ENCODE measurements at regions of chr2 and their contacts with region 1.

Region 1: DNA sequence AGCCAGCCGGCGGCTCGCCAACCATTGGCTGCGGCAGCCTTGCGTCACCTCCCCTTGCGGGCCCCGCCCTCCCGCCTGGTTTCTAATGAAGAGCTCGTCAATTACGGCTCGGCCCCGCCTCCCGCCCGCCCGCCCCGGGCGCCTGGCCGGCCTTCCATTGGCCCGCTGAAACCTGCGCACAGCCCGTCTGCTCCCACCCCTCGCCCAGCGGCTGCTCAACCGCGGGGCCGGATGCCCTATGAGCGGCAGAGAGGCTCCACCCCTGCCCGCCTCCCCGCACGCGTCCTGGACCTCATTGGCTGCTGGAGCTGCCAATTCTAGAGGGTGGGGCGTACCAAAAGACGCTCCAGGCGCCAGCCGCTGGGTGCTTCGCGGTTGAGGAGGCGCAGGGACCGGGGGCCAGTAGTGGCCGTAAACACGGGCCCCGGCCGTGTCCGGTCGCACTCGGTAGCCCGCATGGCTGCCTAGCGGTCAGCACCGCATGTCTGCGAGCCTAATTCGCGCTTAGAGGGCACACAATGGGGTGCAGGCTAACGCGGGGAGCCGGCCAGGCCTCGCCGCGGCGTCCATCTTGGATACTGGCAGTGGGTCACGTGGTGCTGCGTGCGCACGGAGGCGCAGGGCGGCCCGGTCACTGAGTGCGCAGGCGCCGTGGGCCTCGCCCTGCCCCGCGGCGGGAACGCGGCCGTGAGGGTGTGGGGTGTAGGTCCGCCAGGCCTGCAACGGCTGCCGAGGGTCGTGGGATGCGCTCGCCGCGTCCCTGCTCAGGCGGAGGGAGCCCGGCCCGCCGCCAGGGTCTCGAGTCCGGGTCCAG is 454 bp upstream of the HDAC4 start:
- DNase-seq: peak; percentile 99
- H3K4me3 Mint-ChIP-seq: peak overlapping the region; percentile 89
- H3K27ac Mint-ChIP-seq: peak overlapping the region; percentile 97
- H3K4me1 Mint-ChIP-seq: peaks cover 35% of the 10 kb centered on the region
- H3K27me3 Mint-ChIP-seq: no peaks in the 10 kb centered on the region

Region 2: GRCh38 chr2:239143858-239144718 is 257.2 kb before region 1 on chr2:
- CTCF ChIA-PET with region 1: no interaction called
- POLR2A ChIA-PET with region 1: no interaction called
- intact Hi-C with region 1: loop called (anchors 10 kb)
- DNase-seq: peak; percentile 37
- H3K4me3 Mint-ChIP-seq: no peak overlapping the region
- H3K27ac Mint-ChIP-seq: peak overlapping the region; percentile 18
- H3K4me1 Mint-ChIP-seq: peaks cover 7% of the 10 kb centered on the region
- H3K27me3 Mint-ChIP-seq: no peaks in the 10 kb centered on the region

Region 3: DNA sequence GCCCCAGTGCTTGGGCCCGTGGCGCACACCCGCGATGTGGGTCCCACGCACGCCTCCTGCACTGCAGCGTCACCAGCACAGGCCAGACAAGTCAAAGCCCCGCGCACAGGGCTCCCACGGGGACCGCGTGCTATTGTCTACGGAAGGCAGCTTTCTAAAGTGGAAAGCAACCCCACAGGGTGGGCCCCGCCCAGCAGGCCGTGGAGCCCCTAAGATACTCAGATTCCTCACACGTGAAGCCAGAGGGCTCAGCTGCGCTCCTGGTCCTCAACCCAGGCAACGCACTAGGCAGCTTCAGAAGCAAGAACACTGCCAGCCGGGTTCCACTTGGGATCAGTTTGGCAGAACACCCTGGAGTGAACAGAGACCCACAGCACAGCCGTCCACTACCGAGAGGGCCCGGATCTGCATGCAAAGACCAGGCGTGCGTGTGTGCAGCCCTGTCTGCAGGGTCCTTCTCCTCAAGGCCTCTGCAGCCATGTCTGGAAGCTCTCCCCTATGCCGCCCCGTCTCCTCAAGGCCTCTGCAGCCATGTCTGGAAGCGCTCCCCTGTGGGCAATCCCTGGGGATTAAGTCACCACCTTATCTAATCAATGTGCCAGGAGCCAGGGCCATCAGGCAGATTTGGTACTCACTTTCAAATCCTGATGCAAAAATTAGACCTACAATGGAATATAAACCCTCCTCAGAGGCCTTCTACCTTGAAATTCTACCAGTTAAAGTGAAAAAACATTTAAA is 231.8 kb before region 1 on chr2:
- CTCF ChIA-PET with region 1: no interaction called
- POLR2A ChIA-PET with region 1: no interaction called
- intact Hi-C with region 1: no loop called
- DNase-seq: no peak
- H3K4me3 Mint-ChIP-seq: no peak overlapping the region
- H3K27ac Mint-ChIP-seq: no peak overlapping the region
- H3K4me1 Mint-ChIP-seq: peaks cover 20% of the 10 kb centered on the region
- H3K27me3 Mint-ChIP-seq: no peaks in the 10 kb centered on the region

Region 4: GRCh38 chr2:239358062-239358754 is 43.1 kb before region 1 on chr2:
- CTCF ChIA-PET with region 1: no interaction called
- POLR2A ChIA-PET with region 1: no interaction called
- intact Hi-C with region 1: no loop called
- DNase-seq: no peak
- H3K4me3 Mint-ChIP-seq: no peak overlapping the region
- H3K27ac Mint-ChIP-seq: no peak overlapping the region
- H3K4me1 Mint-ChIP-seq: peaks cover 4% of the 10 kb centered on the region
- H3K27me3 Mint-ChIP-seq: no peaks in the 10 kb centered on the region

Region 5: DNA sequence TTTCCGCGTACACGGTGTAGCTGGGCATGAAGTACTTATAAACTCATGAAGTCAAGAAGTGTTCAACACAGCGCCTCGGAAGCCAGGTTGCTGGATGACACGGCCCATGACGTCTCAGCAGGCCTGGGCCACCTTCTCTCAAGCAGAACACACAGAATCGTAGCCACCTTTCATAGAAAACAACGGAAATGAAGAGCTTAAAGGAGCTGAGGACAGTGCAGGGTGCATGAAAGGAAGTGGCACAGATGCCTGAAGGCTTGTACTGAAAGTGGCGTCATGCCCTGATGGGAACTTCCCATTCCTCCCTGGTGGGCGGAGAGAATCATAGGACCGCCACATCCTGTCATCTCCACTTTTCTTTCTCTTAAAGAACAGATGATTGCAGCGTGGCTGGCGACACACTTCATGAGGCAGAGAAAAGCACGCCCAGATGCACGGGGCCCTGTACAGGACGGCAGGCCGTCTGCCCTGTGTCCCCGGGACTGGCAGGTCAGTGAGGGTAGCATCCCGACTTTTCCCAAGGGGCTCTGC is 31.6 kb before region 1 on chr2:
- CTCF ChIA-PET with region 1: no interaction called
- POLR2A ChIA-PET with region 1: interaction called, 10 read pairs
- intact Hi-C with region 1: loop called (anchors 1 kb)
- DNase-seq: peak; percentile 93
- H3K4me3 Mint-ChIP-seq: peak overlapping the region; percentile 68
- H3K27ac Mint-ChIP-seq: peak overlapping the region; percentile 92
- H3K4me1 Mint-ChIP-seq: peaks cover 8% of the 10 kb centered on the region
- H3K27me3 Mint-ChIP-seq: no peaks in the 10 kb centered on the region

Region 6: DNA sequence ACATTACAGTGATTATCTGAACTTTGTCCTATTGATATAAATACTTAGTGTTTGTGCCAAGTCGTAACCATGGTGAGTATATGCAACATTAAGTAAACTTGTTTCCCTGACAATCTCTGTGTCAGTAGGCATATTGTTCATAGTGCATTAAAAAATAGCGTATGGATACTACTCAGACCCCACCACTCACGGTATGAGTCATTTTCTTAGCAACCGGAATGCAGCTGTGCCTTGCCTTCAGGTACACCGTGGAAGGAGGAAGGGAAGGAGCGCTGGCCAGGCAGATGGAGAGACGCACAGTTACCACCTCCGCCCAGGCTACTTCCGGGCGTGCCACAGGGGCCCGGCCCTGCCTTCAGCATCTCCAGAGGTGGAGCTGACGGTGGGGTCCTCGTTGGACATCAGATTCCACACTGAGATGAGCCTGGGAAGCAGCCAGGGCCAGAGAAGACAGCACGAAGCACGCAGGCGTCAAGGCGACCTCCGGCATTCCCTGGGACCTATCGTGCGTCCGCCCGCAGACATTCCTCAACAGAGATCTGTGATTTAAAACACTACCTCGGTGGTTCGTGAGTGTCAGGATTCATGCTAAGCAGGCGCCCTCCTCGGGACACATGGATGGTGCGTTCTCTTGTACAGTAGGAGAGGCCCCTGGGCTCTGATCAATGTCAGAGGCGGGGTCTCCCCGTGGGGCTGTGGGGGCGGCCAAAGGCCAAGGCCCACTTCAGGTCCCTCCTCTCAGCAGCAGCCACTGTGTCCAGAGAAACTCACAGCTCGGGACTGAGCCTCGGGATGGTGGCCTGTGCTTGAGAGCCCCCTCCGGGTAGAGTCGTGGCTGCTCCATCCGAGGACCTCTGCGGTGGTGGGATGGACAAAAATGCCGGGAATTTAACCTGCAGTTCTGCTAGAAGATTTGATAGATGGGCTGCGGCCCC is 81.8 kb after region 1 on chr2:
- CTCF ChIA-PET with region 1: no interaction called
- POLR2A ChIA-PET with region 1: no interaction called
- intact Hi-C with region 1: no loop called
- DNase-seq: no peak
- H3K4me3 Mint-ChIP-seq: no peak overlapping the region
- H3K27ac Mint-ChIP-seq: no peak overlapping the region
- H3K4me1 Mint-ChIP-seq: no peaks in the 10 kb centered on the region
- H3K27me3 Mint-ChIP-seq: peaks cover 2% of the 10 kb centered on the region

Region 7: GRCh38 chr2:239791526-239792404 is 390.5 kb after region 1 on chr2:
- CTCF ChIA-PET with region 1: no interaction called
- POLR2A ChIA-PET with region 1: no interaction called
- intact Hi-C with region 1: no loop called
- DNase-seq: no peak
- H3K4me3 Mint-ChIP-seq: no peak overlapping the region
- H3K27ac Mint-ChIP-seq: no peak overlapping the region
- H3K4me1 Mint-ChIP-seq: no peaks in the 10 kb centered on the region
- H3K27me3 Mint-ChIP-seq: no peaks in the 10 kb centered on the region

Region 8: DNA sequence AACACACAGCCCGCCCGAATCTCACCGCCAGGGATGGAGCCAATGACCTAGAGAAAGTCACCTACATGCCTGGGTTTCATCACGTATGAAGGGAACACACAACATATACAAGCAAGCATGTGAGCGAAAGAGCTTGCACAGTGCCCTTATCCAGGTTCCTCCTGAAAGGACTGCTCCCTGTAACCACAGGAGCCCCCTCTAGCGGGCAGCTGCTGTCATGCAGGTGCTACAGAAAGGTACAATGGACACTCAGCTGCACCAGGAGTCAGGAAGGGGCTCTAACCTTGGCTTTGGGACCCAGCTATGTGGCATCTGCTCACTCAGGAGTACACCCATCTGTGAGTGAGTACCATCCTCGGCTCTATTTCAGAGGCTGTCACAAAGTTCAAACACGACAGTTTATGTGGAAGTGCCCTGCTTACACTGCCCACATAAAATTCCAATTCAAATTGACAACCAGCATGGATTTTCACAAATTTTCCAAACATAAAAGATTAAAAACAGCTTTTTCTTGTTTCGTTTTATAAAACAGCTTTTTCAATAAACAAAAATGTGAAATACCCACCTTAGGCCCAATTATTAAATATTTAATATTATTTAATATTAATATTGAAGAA is 620.3 kb after region 1 on chr2:
- CTCF ChIA-PET with region 1: interaction called, 4 read pairs
- POLR2A ChIA-PET with region 1: no interaction called
- intact Hi-C with region 1: loop called (anchors 10 kb)
- DNase-seq: peak; percentile 76
- H3K4me3 Mint-ChIP-seq: no peak overlapping the region
- H3K27ac Mint-ChIP-seq: no peak overlapping the region
- H3K4me1 Mint-ChIP-seq: peaks cover 19% of the 10 kb centered on the region
- H3K27me3 Mint-ChIP-seq: no peaks in the 10 kb centered on the region

Measured in activated CD4-positive, alpha-beta memory T cell treated with anti-CD3 and anti-CD28 coated beads for 36 hours (primary cell).